RWPE1 (cell line): ENCODE measurements at regions of chr9 and their contacts with region 1.

Region 1: DNA sequence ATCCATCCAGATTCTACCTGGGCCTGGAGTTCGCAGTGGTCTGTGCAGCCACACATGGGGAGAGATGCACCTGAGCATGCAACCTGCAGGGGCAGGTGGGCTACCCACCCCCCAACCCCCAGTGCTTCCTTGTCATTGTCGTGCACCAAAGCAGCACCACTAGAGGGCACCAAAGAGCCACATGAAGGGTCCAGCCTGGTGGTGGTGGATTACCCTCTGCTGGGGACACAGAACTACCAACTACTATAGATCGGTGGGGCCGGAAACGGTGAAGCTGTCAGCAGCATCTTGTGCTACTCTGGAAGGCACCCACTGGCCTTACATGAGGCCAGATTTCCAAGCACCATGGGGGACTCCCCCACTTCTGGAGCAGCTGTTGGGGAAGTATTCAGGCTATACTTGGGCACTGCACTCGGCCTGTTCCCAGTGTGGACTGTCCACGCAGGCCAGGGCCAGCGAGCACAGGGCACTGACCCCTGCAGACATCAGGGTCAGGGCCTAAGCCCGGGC is 60.2 kb upstream of the TBC1D2 start:
- DNase-seq: peak; percentile 97
- H3K27ac ChIP-seq: no peak overlapping the region
- CTCF ChIP-seq: peak; percentile 99

Region 2: GRCh38 chr9:98326459-98327248 is 11.0 kb after region 1 on chr9:
- CTCF ChIA-PET with region 1: interaction called, 10 read pairs
- POLR2A ChIA-PET with region 1: no interaction called
- DNase-seq: no peak
- H3K27ac ChIP-seq: no peak overlapping the region
- CTCF ChIP-seq: no peak

Region 3: DNA sequence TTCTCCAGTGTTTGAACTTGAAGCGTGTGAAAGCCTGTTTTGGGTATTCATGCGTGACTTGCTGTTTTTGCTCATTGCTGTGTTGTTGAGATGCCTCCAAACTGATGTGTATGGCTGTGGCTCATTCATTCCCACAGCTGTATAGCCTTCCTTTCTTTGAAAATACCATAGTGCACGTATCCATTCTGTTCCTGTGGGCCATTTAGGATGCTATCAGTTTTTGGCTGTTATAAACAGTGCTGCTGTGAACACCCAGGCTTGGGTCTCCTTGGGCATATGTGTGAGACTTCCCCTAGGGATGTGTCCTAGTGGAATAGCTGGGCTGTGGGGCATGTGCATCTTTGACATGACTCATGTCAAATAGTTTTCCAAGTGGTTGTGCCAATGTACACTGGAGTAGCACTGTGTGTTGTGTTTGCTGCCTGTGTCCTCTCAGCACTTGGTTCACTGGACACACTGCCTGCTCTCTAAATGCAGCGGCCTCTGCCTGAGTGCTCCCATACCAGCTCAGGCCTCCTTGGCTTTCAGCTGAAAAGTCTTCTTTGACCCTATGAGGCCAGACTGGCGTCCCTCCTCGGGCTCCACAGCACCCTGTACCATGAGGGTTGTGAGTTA is 42.4 kb after region 1 on chr9:
- CTCF ChIA-PET with region 1: no interaction called
- POLR2A ChIA-PET with region 1: no interaction called
- DNase-seq: no peak
- H3K27ac ChIP-seq: no peak overlapping the region
- CTCF ChIP-seq: no peak

Region 4: DNA sequence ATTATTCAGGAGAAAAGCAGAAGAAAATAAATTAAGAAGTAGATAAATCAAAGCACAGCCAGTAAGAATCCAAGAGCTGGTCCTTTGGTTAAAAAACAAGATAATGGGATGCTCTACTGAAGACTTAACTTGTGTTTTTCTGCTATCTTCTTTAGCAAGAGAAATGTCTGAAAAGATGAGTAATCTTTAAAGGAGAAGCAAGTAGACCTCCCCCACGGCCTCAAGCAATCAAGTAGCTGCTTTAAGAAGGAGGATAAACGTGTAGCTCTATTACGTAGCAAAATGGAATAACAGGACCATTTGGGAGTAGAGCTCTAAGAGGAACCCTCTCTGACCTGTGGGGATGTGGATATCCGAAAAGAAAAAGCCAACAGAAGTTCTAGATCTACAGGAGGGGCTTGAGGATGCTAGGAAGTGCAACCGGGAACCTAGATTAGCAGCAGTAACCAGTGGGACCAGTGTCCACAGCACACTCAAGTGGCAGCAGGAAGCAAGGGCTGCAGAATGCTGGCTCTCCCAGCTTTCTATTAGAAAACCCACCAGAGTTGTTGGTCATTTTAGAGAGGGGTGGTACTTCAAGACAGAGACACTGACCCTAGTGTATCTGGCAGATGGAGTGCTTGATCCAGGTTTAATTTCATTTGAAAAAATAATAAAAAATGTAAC is 207.8 kb after region 1 on chr9:
- CTCF ChIA-PET with region 1: interaction called, 18 read pairs
- POLR2A ChIA-PET with region 1: no interaction called
- DNase-seq: peak; percentile 64
- H3K27ac ChIP-seq: no peak overlapping the region
- CTCF ChIP-seq: 0 out of 2 replicates have a peak, but pooled peaks have one; percentile 10

Region 5: DNA sequence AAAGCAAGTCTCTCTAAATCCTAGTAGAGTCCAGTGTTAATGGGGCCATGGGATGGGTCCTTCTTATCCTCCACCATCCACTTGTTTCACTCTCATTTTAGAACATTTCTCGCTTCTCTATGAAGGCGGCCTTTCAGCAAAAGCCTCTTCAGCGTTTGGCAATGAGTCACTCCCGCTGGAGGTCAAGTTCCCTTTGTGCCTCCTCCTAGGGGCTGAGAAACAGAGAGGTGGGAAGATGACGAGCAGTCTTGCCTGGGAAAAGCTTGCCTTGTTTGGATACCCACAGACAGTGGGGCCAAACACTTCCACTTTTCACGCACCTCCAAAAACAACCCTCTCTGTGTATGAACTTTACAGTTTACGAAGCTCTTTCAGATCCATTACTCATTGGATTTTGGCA is 224.3 kb after region 1 on chr9:
- CTCF ChIA-PET with region 1: interaction called, 13 read pairs
- POLR2A ChIA-PET with region 1: no interaction called
- DNase-seq: no peak
- H3K27ac ChIP-seq: no peak overlapping the region
- CTCF ChIP-seq: no peak

Region 6: DNA sequence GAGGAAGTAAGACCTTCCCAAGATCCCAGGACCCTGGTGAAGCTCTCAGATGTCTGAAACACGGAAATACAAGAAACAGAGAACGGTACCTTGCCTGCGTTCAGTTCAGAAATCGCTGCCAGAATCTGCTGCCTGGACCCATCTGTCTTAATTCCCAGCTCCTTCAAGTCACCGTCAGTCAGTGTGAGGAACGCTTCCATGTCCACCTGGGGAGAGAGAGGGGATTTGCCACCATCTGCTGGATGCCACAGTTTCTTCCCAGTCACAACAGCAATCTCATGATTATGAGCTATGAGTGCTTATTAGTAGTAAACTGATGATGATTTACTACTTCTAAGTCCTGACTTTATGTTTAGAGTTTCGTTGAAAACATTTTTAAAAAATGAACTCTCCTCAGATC is 429.9 kb after region 1 on chr9:
- CTCF ChIA-PET with region 1: interaction called, 13 read pairs
- POLR2A ChIA-PET with region 1: no interaction called
- DNase-seq: no peak
- H3K27ac ChIP-seq: no peak overlapping the region
- CTCF ChIP-seq: no peak

Region 7: GRCh38 chr9:98781588-98782383 is 466.2 kb after region 1 on chr9:
- CTCF ChIA-PET with region 1: interaction called, 10 read pairs
- POLR2A ChIA-PET with region 1: no interaction called
- DNase-seq: peak; percentile 98
- H3K27ac ChIP-seq: peak overlapping the region; percentile 62
- CTCF ChIP-seq: no peak